ENCODE measurements at regions of chr1 and their contacts with region 1.

Region 1: DNA sequence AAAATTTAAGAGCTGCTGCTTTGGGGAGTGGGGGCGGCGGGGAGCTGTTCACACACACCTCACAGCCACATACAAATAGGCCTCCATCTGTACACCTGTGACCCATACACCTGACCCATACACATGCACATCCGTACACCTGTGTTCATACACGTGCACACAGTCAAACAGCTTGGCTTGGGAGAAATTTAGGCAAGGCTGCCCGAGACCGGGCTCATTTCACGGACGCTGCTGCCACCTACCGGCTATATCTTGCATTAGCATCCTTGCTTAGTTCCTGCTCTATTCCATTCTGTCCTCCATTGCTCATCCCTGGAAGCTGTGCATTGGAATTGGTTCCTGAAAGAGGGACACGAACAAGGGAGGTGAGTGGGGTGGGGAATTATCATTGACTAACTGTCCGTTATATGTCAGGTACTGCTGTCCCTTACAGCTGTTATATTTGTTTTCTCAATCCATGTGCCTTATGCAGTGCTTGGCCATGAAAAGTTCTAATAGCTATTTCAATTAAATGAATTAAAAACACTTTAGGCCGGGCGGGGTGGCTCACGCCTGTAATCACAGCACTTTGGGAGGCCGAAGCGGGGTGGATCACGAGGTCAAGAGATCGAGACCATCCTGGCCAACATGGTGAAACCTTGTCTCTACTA is 37.1 kb upstream of the EPB41 start:
- DNase-seq: peak; percentile 84
- ATAC-seq: peak; percentile 77
- H3K4me3 Mint-ChIP-seq: no peak overlapping the region
- H3K27ac Mint-ChIP-seq: no peak overlapping the region
- H3K4me1 Mint-ChIP-seq: peaks cover 6% of the 10 kb centered on the region
- H3K27me3 Mint-ChIP-seq: peaks cover 2% of the 10 kb centered on the region
- CTCF ChIP-seq: peak; percentile 98

Region 2: DNA sequence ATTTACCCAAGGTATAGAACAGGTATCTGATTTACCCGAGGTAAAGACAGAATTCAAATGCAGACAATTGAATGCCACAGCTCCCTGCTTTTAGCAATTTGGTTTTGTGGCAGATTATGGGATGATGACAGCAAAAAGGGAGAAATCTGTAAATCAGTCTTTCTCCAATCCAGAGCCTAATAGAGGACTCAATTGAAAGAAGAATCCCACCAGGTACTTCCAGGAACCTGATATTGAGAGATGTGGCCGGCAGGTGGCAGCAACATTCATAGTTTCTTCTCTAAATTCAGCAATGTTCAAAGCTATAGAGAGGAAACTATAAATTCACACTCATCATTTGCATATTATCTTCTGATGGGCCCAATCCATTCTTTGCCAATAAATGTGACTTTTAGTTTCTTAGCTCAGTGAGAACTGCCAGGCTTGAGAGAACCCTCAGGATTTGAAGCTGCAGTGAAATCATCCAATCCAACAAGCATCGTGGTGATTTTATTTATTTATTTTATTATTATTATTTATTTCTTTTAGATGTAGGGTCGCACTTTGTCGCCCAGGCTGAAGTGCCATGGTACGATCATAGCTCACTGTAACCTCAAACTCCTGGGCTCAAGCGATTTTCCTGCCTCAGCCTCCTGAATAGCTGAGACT is 517.5 kb before region 1 on chr1:
- CTCF ChIA-PET with region 1: interaction called, 9 read pairs
- POLR2A ChIA-PET with region 1: no interaction called
- intact Hi-C with region 1: loop called (anchors 5 kb)
- DNase-seq: peak; percentile 93
- ATAC-seq: peak; percentile 84
- H3K4me3 Mint-ChIP-seq: no peak overlapping the region
- H3K27ac Mint-ChIP-seq: no peak overlapping the region
- H3K4me1 Mint-ChIP-seq: peaks cover 2% of the 10 kb centered on the region
- H3K27me3 Mint-ChIP-seq: no peaks in the 10 kb centered on the region
- CTCF ChIP-seq: peak; percentile 80

Region 3: DNA sequence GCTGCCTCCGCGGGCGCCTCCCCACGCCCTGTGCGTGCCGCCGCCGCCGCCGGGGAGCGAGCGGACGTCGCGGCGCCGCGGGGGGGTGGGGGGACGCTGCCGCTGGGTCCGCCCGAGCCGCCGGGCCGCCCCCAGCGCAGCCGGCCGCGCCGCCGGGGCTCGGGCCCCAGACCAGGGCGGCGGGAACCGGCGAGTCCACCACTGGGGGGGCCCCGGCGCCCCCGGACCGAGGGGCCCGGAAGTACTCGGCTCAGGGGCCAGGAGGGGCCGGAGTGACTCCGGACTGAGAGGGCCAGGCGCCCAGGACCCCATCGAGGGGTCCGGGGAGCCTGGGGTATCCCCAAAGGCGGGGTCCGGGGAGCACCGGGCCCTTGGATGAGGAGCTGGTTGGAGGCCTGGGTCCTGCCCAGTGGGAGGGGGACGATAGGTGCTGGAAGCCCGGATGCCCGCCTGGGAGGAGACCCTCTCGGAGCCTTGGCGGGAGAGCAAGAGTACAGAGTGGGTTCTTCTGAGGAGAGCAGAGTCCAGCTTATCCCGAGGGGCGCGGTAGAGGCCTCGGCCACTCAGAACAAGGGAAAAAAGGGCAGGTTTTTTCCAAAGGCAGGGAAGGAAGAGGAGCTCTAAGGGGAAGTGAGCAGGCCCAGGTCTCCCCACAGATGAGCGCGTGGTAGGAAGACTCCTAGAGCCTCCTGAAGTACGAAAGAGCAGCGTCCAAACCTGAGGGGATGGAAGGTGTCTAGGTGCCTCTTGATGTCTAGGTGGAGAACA is 208.1 kb before region 1 on chr1:
- CTCF ChIA-PET with region 1: no interaction called
- POLR2A ChIA-PET with region 1: no interaction called
- intact Hi-C with region 1: no loop called
- DNase-seq: peak; percentile 61
- ATAC-seq: peak; percentile 65
- H3K4me3 Mint-ChIP-seq: peak overlapping the region; percentile 89
- H3K27ac Mint-ChIP-seq: peak overlapping the region; percentile 93
- H3K4me1 Mint-ChIP-seq: peaks cover 11% of the 10 kb centered on the region
- H3K27me3 Mint-ChIP-seq: no peaks in the 10 kb centered on the region
- CTCF ChIP-seq: no peak

Region 4: GRCh38 chr1:28736450-28737306 is 140.6 kb before region 1 on chr1 and contains the start of gene YTHDF2:
- CTCF ChIA-PET with region 1: interaction called, 15 read pairs
- POLR2A ChIA-PET with region 1: no interaction called
- intact Hi-C with region 1: no loop called
- DNase-seq: peak; percentile 99
- ATAC-seq: peak; percentile 91
- H3K4me3 Mint-ChIP-seq: peak within 1 kb of the TSS; percentile 98
- H3K27ac Mint-ChIP-seq: peak within 1 kb of the TSS; percentile 92
- H3K4me1 Mint-ChIP-seq: peaks cover 35% of the 10 kb centered on the region
- H3K27me3 Mint-ChIP-seq: no peaks in the 10 kb centered on the region
- CTCF ChIP-seq: peak; percentile 97
- total RNA-seq, gene YTHDF2: 72.2 to 82.1 TPM

Region 5: GRCh38 chr1:28792644-28793121 is 84.6 kb before region 1 on chr1:
- CTCF ChIA-PET with region 1: interaction called, 28 read pairs
- POLR2A ChIA-PET with region 1: no interaction called
- intact Hi-C with region 1: no loop called
- DNase-seq: no peak
- ATAC-seq: no peak
- H3K4me3 Mint-ChIP-seq: no peak overlapping the region
- H3K27ac Mint-ChIP-seq: no peak overlapping the region
- H3K4me1 Mint-ChIP-seq: no peaks in the 10 kb centered on the region
- H3K27me3 Mint-ChIP-seq: peaks cover 2% of the 10 kb centered on the region
- CTCF ChIP-seq: no peak

Region 6: GRCh38 chr1:28860332-28861073 is 16.8 kb before region 1 on chr1:
- CTCF ChIA-PET with region 1: interaction called, 21 read pairs
- POLR2A ChIA-PET with region 1: no interaction called
- intact Hi-C with region 1: no loop called
- DNase-seq: no peak
- ATAC-seq: no peak
- H3K4me3 Mint-ChIP-seq: no peak overlapping the region
- H3K27ac Mint-ChIP-seq: no peak overlapping the region
- H3K4me1 Mint-ChIP-seq: no peaks in the 10 kb centered on the region
- H3K27me3 Mint-ChIP-seq: no peaks in the 10 kb centered on the region
- CTCF ChIP-seq: no peak

Region 7: DNA sequence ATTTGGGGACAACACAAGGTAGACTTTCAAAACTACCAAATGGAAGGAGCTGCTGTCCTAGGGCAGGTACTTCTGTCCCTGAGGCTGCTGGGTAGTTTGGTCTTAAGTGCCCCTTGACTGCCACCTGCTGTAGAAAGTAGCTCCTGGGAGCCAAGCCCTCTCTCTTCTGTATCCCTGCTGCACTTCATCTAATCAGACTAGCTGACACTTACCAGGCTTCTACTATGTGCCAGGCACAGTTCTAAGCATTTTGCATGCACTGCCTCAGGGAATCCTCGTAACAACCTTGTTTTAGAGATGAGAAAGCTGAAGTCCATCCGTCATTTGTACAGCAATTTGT is 320.3 kb after region 1 on chr1:
- CTCF ChIA-PET with region 1: interaction called, 40 read pairs
- POLR2A ChIA-PET with region 1: interaction called, 3 read pairs
- intact Hi-C with region 1: loop called (anchors 2 kb)
- DNase-seq: peak; percentile 61
- ATAC-seq: peak; percentile 94
- H3K4me3 Mint-ChIP-seq: no peak overlapping the region
- H3K27ac Mint-ChIP-seq: no peak overlapping the region
- H3K4me1 Mint-ChIP-seq: peaks cover 12% of the 10 kb centered on the region
- H3K27me3 Mint-ChIP-seq: no peaks in the 10 kb centered on the region
- CTCF ChIP-seq: peak; percentile 38